Heart right ventricle (tissue), 16 donors: ENCODE measurements at regions of chr5 and their contacts with region 1.

Region 1: DNA sequence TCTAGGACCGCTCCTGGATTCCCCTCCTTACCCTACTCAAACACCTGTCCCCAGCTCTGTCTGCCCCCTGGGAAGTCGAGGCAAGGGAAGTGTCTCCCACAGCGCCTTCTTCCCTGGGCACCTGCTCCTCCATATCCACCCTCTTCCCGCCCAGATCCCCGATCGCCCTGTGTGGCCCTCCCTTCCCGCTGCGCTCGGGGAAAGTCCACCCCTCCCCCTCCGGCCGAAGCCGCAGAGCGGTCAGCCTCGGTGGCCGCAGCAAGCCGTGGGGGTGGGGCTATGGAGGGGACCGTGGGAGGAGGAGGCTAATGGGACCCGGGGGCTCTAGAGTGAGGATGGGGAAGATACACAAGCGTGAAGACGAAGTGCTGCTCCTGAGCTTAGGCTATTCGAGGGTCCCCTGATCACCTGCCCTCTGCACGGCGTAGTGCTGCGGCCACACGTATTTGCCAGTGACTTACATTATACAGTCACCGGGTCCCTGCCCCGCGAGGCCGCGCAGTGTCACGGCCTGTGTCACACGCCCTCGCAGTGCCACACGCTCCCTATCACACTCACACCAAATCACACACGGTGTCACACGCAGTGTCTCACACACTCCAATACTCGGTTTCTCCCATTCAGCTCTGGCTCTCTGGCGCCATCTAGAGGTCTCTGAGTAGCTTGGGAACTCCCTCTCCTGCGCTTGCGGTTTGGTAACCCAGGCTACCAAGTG is 658 bp upstream of the PCDH1 start:
- DNase-seq: peak; percentile 77 to 96
- ATAC-seq: peak; percentile 76 to 90 (median 84)
- H3K4me3 ChIP-seq: peak overlapping the region; percentile 38 to 92 (median 84)
- H3K27ac ChIP-seq: peak overlapping the region; percentile 77 to 97 (median 93)
- H3K4me1 ChIP-seq: peaks cover 5 to 95% (median 60%) of the 10 kb centered on the region in 9 donors
- H3K27me3 ChIP-seq: peaks cover 8 to 94% (median 60%) of the 10 kb centered on the region in 7 donors
- CTCF ChIP-seq: peak; percentile 96 to 99 (median 98)

Region 2: DNA sequence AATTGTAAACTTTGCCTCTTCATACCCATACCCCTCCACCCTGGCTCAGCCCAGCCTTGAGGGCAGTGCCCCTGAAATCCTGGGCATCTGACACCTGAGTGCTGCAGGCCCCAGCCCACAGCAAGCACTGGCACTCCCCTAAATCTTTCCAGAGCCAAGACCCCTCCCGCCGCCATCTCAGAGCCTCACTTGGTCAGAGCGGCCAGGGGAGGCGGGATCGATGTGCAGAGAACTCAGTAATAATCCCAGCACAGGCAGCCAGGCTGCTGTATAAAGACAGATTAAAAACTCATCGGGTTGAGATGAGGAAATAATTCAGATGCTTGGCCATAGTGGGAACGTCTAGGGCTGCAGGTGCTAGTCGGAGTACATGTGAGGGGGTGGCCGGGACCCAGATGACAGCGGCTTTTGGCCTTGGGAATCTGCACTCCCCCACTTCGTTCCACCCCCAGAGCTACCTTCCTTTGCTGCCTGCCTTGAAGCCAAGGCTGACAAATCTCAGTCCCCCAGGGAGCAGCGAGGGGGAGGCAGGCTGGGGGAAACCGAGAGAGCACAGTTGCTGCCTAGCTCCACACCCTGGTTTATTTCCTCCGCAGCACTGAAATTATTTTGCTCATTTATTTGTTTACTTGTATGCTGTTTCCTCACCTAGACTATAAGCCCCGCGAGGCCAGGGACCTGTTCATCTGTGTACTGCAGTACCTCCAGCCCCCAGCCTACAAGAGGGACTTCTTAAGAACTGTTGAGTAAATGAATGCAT is 177.3 kb before region 1 on chr5:
- intact Hi-C with region 1: loop called (anchors 1 to 5 kb)
- DNase-seq: peak in 1 of 2 donors; percentile 42
- ATAC-seq: peak in 5 of 8 donors; percentile 34 to 64 (median 45)
- H3K4me3 ChIP-seq: peak overlapping the region in 9 of 10 donors; percentile 39 to 69 (median 58)
- H3K27ac ChIP-seq: peak overlapping the region in 4 of 10 donors; percentile 16 to 66 (median 32)
- H3K4me1 ChIP-seq: peaks cover 3 to 24% (median 16%) of the 10 kb centered on the region in 9 donors
- H3K27me3 ChIP-seq: peaks cover 0 to 72% (median 22%) of the 10 kb centered on the region in 7 donors
- CTCF ChIP-seq: no peak

Region 3: GRCh38 chr5:141811287-141812155 is 67.3 kb before region 1 on chr5:
- intact Hi-C with region 1: loop called in 6 of 10 experiments (anchors 2 to 5 kb)
- DNase-seq: no peak
- ATAC-seq: no peak
- H3K4me3 ChIP-seq: no peak overlapping the region
- H3K27ac ChIP-seq: peak overlapping the region in 2 of 10 donors; percentile 4 to 91
- H3K4me1 ChIP-seq: peaks cover 10 to 81% (median 40%) of the 10 kb centered on the region in 9 donors
- H3K27me3 ChIP-seq: peaks cover 0 to 41% (median 15%) of the 10 kb centered on the region in 7 donors
- CTCF ChIP-seq: peak in 8 of 9 donors; percentile 23 to 66 (median 58)

Region 4: GRCh38 chr5:141843162-141843927 is 35.5 kb before region 1 on chr5:
- intact Hi-C with region 1: loop called in 4 of 10 experiments (anchors 2 to 5 kb)
- DNase-seq: no peak
- ATAC-seq: peak in 3 of 8 donors; percentile 6 to 17 (median 13)
- H3K4me3 ChIP-seq: no peak overlapping the region
- H3K27ac ChIP-seq: peak overlapping the region in 9 of 10 donors; percentile 55 to 84 (median 67)
- H3K4me1 ChIP-seq: peaks cover 14 to 86% (median 62%) of the 10 kb centered on the region in 9 donors
- H3K27me3 ChIP-seq: peaks cover 0 to 11% (median 0%) of the 10 kb centered on the region in 7 donors
- CTCF ChIP-seq: no peak

Region 5: GRCh38 chr5:141923448-141924352 is 44.8 kb after region 1 on chr5 and contains the start of gene DELE1:
- intact Hi-C with region 1: loop called in 2 of 10 experiments (anchors 5 kb)
- DNase-seq: peak; percentile 95 to 97
- ATAC-seq: peak; percentile 98 to 99 (median 98)
- H3K4me3 ChIP-seq: peak within 1 kb of the TSS; percentile 37 to 81 (median 66)
- H3K27ac ChIP-seq: peak within 1 kb of the TSS; percentile 84 to 99 (median 98)
- H3K4me1 ChIP-seq: peaks cover 4 to 55% (median 37%) of the 10 kb centered on the region in 9 donors
- H3K27me3 ChIP-seq: no peaks in the 10 kb centered on the region
- CTCF ChIP-seq: no peak
- total RNA-seq, gene DELE1: 82.1 to 192 (median 141) TPM

Region 6: DNA sequence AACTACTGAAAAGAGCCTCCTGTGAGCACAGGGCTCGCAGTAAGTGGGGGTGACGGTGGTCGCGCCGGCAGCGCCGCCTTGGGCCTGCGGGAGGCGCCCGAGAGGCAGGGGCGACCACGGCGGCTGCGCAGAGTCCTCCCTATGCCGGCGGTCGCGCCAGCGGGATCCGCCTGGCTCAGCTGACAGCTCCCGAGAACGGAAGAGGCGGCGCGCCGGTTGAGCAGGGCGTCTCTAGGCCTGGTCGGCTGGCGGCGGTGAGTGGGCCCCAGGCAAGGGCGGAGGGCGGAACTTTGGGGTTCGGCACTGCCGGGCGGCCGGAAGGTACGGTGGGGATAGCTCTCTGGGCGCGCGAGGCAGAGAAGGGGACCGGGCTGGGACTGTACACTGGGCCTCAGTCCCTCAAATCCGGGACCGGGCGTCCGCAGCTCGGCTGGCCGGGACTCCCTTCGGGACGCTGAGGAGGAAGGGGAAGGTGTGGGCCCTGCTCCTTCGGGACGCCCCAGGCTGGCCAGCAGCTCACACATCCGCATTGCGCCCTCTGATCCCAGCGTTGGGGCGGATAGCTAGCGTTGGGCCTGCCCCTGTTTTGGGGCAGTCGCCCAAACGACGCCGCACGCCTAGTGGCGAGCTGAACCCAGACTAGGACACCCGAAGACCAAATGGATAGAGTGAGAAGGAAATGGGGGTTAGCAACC is 90.2 kb after region 1 on chr5 and contains the start of gene RNF14:
- intact Hi-C with region 1: loop called in 2 of 10 experiments (anchors 5 to 10 kb)
- DNase-seq: peak; percentile 91 to 95
- ATAC-seq: peak; percentile 99 to 100 (median 99)
- H3K4me3 ChIP-seq: peak within 1 kb of the TSS; percentile 49 to 90 (median 76)
- H3K27ac ChIP-seq: peak within 1 kb of the TSS; percentile 65 to 98 (median 96)
- H3K4me1 ChIP-seq: peaks cover 0 to 41% (median 27%) of the 10 kb centered on the region in 9 donors
- H3K27me3 ChIP-seq: no peaks in the 10 kb centered on the region
- CTCF ChIP-seq: peak; percentile 96 to 99 (median 98)
- total RNA-seq, gene RNF14: 84.6 to 130 (median 102) TPM

Region 7: DNA sequence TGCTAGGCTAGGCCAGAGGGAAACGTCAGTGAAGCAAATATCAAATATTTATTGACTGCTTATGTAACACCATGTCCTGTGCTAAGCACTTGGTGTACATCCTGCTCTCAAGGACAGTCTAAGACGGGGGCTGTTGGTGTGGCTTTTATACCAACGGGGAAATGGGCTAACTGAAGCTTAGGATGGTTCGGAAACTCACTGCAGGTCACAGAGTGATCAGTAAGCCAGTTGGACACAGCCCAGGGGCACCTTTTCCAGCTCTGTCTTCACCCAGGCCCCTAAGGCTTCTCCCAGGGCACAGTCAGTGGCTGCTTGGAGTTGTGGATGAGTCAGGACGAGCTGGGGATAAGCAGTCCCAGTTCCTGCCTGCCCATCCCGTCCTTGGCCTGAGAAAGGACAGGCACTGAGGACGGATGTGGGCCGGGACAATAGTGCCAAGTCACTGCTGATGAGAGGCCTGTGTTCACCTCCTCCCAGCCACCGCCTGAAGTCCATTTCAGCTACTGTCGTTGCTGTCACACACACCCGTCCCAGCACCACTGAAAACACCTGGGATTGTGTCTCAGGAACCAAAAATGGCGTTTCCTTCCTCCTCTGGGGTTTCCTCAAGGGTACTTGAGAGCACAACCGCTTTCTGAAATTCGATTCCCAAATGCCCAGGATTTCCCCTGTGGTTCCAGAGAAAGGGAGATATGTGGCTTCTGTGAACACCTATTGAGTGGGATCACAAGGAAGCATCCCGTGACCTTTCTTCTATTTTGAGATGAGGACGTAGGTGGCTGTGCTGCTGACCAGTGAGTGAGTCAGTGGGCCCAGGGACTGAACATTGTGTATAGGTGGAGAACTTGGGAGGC is 463.5 kb after region 1 on chr5:
- intact Hi-C with region 1: no loop called
- DNase-seq: no peak
- ATAC-seq: peak; percentile 71 to 93 (median 80)
- H3K4me3 ChIP-seq: no peak overlapping the region
- H3K27ac ChIP-seq: peak overlapping the region in 7 of 10 donors; percentile 3 to 40 (median 27)
- H3K4me1 ChIP-seq: peaks cover 0 to 10% (median 0%) of the 10 kb centered on the region in 9 donors
- H3K27me3 ChIP-seq: no peaks in the 10 kb centered on the region
- CTCF ChIP-seq: no peak